Endothelial cell of umbilical vein (primary cell): ENCODE measurements at regions of chr4 and their contacts with region 1.

Region 1: GRCh38 chr4:166165829-166166420 is 292.9 kb downstream of the TLL1 start:
- DNase-seq: peak; percentile 77
- H3K4me3 ChIP-seq: no peak overlapping the region
- H3K27ac ChIP-seq: no peak overlapping the region
- H3K4me1 ChIP-seq: no peaks in the 10 kb centered on the region
- H3K27me3 ChIP-seq: peaks cover 0 to 4% of the 10 kb centered on the region in 2 experiments
- CTCF ChIP-seq: peak; percentile 56 to 64
- POLR2A ChIP-seq: no peak

Region 2: DNA sequence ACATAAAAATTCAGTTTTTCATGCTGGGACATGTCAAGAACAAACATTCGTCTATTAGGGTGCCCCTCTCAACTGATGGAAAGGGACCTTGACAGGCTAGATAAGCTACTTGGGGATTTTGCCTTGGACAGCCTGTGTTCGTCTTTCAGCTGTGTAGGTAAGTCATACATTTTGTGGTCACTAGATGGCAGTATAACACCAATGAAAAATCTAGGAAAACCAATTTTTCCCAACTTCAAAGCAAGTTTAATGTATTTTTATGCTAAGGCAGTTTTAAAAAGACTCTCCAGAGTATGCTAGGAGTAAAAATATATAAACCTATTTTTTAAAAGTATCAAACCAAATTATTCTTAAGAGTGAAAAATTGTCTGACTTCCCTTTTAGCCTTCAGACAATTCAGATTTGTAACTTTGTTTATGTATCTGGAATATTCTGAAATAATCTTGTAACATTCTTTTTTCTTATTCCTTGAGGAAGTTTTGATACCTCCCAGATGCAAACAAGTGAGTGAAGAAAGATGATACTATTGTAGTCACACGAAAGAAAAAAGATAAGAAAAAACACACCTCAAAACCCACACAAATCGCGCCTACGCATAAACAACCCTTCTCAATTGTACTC is 628.8 kb before region 1 on chr4:
- CTCF ChIA-PET with region 1: interaction called, 8 read pairs
- POLR2A ChIA-PET with region 1: no interaction called
- dilution Hi-C with region 1: no loop called
- intact Hi-C with region 1: loop called (anchors 1 kb)
- DNase-seq: peak; percentile 83
- H3K4me3 ChIP-seq: no peak overlapping the region
- H3K27ac ChIP-seq: no peak overlapping the region
- H3K4me1 ChIP-seq: no peaks in the 10 kb centered on the region
- H3K27me3 ChIP-seq: no peaks in the 10 kb centered on the region
- CTCF ChIP-seq: peak; percentile 34 to 47
- POLR2A ChIP-seq: no peak

Region 3: DNA sequence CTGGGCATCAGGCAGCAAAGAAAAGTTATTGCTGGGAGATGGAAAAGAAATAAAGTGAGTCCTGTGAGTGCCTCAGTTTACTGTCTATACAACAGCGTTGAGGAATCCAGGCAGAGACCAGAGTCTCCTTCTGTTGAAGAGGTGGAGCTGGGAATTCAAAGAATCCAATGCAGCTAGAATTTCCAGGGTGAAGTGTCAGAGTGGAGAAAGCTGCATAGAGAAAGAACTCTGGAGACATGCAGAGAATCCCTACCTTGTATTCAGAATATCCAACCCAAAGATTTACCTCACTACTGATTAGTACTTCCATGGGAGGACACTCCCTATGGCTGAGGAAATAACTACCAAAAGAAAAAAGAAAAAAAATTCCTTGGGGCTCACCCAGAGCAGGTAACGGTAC is 272.6 kb before region 1 on chr4:
- CTCF ChIA-PET with region 1: no interaction called
- POLR2A ChIA-PET with region 1: no interaction called
- dilution Hi-C with region 1: no loop called
- intact Hi-C with region 1: no loop called
- DNase-seq: no peak
- H3K4me3 ChIP-seq: no peak overlapping the region
- H3K27ac ChIP-seq: no peak overlapping the region
- H3K4me1 ChIP-seq: no peaks in the 10 kb centered on the region
- H3K27me3 ChIP-seq: no peaks in the 10 kb centered on the region
- CTCF ChIP-seq: no peak
- POLR2A ChIP-seq: no peak

Region 4: DNA sequence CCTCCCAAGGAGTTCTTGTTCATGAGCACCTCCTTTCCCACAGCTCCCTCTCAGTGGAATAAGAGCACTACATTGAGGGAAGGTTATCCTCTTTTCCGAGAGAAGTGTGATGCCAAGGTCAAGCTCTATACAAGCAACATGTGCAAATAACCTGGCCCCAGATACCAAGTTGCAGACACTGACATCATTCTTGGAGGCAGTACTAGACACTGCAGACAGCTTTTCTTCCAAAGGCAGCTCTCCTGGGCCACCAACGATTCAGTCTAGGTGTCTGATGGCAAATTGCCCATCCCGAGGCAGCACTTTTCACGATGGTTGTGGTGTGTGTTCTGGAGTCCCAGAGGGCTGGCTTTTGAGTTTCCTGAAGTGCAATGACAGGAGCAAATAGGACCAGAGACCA is 92.0 kb after region 1 on chr4:
- CTCF ChIA-PET with region 1: interaction called, 77 read pairs
- POLR2A ChIA-PET with region 1: no interaction called
- dilution Hi-C with region 1: no loop called
- intact Hi-C with region 1: loop called (anchors 1 kb)
- DNase-seq: no peak
- H3K4me3 ChIP-seq: no peak overlapping the region
- H3K27ac ChIP-seq: no peak overlapping the region
- H3K4me1 ChIP-seq: no peaks in the 10 kb centered on the region
- H3K27me3 ChIP-seq: no peaks in the 10 kb centered on the region
- CTCF ChIP-seq: no peak
- POLR2A ChIP-seq: no peak

Region 5: DNA sequence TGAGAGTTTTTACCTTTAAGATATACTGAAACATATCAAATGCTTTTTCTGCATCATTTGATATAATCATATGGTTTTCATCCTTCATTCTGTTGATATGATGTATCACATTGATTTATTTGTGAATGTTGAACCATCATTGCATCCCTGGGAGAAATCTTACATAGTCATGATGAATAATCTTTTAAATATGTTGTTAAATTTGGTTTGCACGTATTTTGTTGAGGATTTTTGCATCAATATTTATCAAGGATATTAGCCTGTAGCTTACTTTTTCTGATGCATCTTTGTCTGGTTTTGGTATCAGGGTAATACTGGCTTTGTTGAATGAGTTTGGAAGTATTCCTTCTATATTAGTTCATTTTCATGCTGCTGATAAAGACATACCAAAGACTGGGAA is 248.5 kb after region 1 on chr4:
- CTCF ChIA-PET with region 1: no interaction called
- POLR2A ChIA-PET with region 1: no interaction called
- dilution Hi-C with region 1: no loop called
- intact Hi-C with region 1: no loop called
- DNase-seq: no peak
- H3K4me3 ChIP-seq: no peak overlapping the region
- H3K27ac ChIP-seq: no peak overlapping the region
- H3K4me1 ChIP-seq: no peaks in the 10 kb centered on the region
- H3K27me3 ChIP-seq: no peaks in the 10 kb centered on the region
- CTCF ChIP-seq: no peak
- POLR2A ChIP-seq: no peak

Region 6: GRCh38 chr4:167021545-167022155 is 855.7 kb after region 1 on chr4:
- CTCF ChIA-PET with region 1: interaction called, 3 read pairs
- POLR2A ChIA-PET with region 1: no interaction called
- dilution Hi-C with region 1: no loop called
- intact Hi-C with region 1: loop called (anchors 5 kb)
- DNase-seq: peak; percentile 70
- H3K4me3 ChIP-seq: no peak overlapping the region
- H3K27ac ChIP-seq: no peak overlapping the region
- H3K4me1 ChIP-seq: no peaks in the 10 kb centered on the region
- H3K27me3 ChIP-seq: no peaks in the 10 kb centered on the region
- CTCF ChIP-seq: peak; percentile 70 to 77
- POLR2A ChIP-seq: no peak

Region 7: DNA sequence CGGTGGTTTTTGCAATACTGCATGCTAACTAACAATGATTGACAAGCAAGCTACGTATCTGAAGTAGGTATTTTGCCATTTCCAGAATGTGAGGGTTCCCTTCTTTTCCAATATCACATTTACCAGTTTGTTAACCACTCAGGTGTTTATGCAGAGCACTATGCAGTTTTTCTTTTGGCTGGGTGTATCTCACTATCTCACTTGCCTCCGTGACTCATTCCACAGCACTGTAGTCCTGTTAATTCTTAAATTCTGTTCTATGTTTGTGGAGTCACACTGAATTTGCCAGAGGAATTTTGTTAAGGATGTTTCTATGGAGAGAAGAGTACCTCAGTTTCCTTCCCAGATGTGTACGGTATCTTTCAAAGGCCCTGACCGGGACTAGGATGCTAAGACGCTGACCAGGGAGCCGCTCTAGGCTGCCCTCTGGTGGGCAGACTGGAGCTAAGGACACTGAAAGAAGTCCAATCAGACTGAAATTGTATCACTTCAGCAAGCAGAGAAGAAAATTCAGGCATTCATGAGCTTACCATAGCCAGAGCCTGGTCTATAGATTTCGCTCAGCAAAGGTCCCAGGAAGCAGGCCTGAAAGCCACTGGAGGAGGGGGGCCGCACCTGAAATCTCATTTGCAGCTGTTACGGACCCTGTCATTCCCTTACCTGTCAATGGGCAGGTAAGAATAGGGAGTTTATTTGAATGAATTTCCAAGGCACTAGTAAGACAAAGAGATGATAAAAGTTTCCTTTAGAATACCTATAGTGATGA is 1456.7 kb after region 1 on chr4:
- CTCF ChIA-PET with region 1: interaction called, 16 read pairs
- POLR2A ChIA-PET with region 1: no interaction called
- dilution Hi-C with region 1: no loop called
- intact Hi-C with region 1: loop called (anchors 1 kb)
- DNase-seq: peak; percentile 53
- H3K4me3 ChIP-seq: no peak overlapping the region
- H3K27ac ChIP-seq: no peak overlapping the region
- H3K4me1 ChIP-seq: no peaks in the 10 kb centered on the region
- H3K27me3 ChIP-seq: no peaks in the 10 kb centered on the region
- CTCF ChIP-seq: peak; percentile 78 to 91
- POLR2A ChIP-seq: no peak

Region 8: GRCh38 chr4:168153596-168154440 is 1987.9 kb after region 1 on chr4:
- CTCF ChIA-PET with region 1: interaction called, 8 read pairs
- POLR2A ChIA-PET with region 1: no interaction called
- dilution Hi-C with region 1: no loop called
- intact Hi-C with region 1: loop called (anchors 5 kb)
- DNase-seq: peak; percentile 79
- H3K4me3 ChIP-seq: peak overlapping the region in 2 of 3 experiments; percentile 18 to 51
- H3K27ac ChIP-seq: no peak overlapping the region
- H3K4me1 ChIP-seq: peaks cover 4% of the 10 kb centered on the region
- H3K27me3 ChIP-seq: no peaks in the 10 kb centered on the region
- CTCF ChIP-seq: peak; percentile 57 to 73
- POLR2A ChIP-seq: peak; percentile 29